Right cardiac atrium (tissue), 5 donors: ENCODE measurements at regions of chr11 and their contacts with region 1.

Region 1: DNA sequence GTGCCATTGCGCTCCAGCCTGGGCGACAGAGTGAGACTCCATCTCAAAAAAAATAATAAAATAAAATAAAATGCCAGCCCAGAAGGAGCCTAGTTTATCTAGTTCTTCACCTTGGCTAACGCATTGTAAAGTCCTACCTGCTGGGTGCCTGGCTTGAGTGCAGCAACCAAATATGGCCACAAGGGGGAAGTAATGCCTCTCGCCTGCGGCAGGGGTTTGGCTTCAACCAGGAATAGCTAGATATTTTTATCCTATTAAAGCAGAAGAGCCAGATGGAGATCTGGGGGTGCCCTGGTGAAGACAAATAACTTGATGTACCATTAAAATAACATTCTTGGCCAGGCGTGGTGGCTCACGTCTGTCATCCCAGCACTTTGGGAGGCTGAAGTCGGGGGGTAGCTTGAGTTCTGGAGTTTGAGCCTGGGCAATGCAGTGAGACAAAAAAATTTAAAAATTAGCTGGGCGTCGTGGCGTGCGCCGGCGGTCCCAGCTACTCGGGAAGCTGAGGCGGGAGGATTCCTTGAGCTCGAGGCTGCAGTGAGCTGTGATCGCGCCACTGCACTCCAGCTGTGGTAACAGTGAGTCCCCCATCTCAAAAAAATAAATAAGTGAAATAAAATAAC is 20.6 kb upstream of the PLEKHB1 start:
- DNase-seq: peak; percentile 53 to 79 (median 79)
- ATAC-seq: peak; percentile 77 to 85
- H3K4me3 ChIP-seq: no peak overlapping the region
- H3K27ac ChIP-seq: no peak overlapping the region
- H3K4me1 ChIP-seq: no peaks in the 10 kb centered on the region
- H3K27me3 ChIP-seq: no peaks in the 10 kb centered on the region

Region 2: DNA sequence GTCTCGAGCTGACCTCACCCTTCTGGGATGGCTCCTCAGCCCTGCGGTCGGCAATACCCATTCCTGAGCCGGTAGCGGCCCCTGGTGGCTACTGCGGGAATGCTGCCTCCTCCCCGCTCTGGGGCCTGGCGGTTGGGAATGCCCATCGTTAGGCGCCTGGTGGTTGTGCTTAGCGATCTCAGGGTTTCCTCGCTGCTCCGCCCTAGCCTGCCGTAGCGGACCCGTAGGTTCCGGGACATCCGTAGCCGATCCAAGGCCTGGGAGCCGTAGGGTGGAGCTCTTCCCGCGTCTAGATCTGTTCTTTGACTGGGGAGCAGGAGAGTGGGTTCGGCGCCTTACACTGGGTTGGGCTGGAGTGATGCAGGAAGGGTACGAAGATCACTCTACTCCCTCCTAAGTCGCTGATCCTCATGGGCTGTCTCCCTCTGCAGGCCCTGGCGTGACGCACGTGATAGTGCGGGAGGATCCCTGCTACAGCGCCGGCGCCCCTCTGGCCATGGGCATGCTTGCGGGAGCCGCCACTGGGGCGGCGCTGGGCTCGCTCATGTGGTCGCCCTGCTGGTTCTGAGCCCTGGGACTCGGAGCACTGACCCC is 35.3 kb after region 1 on chr11:
- intact Hi-C with region 1: loop called in 3 of 4 experiments (anchors 2 to 5 kb)
- DNase-seq: peak; percentile 87 to 97 (median 96)
- ATAC-seq: peak; percentile 96
- H3K4me3 ChIP-seq: peak overlapping the region; percentile 16
- H3K27ac ChIP-seq: no peak overlapping the region
- H3K4me1 ChIP-seq: peaks cover 6% of the 10 kb centered on the region
- H3K27me3 ChIP-seq: no peaks in the 10 kb centered on the region

Region 3: GRCh38 chr11:73876424-73877300 is 250.9 kb after region 1 on chr11 and contains the starts of genes COA4 and PAAF1:
- intact Hi-C with region 1: no loop called
- DNase-seq: peak; percentile 95 to 97 (median 96)
- ATAC-seq: peak; percentile 99 to 100
- H3K4me3 ChIP-seq: peak within 1 kb of the TSS; percentile 47
- H3K27ac ChIP-seq: peak within 1 kb of the TSS; percentile 48
- H3K4me1 ChIP-seq: peaks cover 6% of the 10 kb centered on the region
- H3K27me3 ChIP-seq: no peaks in the 10 kb centered on the region
- total RNA-seq, gene COA4: 63.9 to 71.8 (median 65.3) TPM
- total RNA-seq, gene PAAF1: 13.9 to 22.8 (median 18.7) TPM